ENCODE measurements at regions of chr18 and their contacts with region 1.

Region 1: DNA sequence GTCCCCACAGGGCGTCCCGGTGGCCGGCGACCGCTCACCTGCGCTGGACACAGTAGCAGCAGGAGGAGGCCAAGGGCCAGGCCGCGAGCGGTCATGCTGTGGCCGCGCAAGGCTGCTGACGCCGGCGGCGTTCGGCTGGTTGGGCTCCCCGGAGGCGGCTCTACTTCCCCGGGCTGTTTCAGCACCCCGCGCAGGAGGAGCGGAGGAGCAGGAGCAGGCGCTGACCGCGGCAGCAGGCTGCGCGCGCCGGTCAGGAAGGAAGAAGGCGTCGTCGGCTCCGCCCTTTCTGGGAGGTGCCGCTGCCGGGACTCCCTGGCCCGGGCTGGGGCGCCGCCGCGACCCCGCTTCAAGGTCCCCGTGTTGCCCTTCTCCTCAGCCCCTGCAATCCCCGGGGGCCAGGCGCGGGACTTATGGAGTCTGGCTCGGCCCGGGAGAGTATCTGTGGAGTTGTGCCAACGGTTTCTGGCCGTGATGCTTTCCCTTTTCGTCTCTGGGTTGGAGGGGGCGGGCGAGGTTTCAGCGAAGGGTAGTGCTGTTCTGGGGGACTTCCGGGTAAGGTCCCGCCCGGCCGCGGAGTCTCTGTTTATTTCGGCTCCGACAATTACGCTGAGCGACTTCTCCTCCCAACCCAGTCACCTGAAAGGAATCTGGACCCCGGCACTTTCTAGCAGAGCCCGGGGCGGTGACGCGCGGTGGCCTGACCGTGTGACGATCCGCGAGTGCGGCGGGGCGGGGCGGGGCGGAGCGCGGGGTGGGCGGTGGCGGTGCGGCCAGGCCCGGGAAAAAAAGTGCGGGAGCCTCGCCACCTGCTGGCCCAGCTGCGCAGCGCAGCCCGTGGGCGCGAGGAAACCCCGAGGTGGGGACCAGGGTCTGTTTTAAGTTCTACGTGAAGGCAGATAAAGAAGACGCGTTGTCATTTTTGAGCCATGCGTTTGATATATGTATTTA is at the start of gene NPC1:
- DNase-seq: peak; percentile 84 to 96 (median 91)
- ATAC-seq: peak; percentile 88
- H3K4me3 ChIP-seq: peak within 1 kb of the TSS; percentile 99 to 100
- H3K4me3 Mint-ChIP-seq: peak within 1 kb of the TSS; percentile 95
- H3K27ac ChIP-seq: peak within 1 kb of the TSS; percentile 99 to 100
- H3K27ac Mint-ChIP-seq: peak within 1 kb of the TSS; percentile 97
- H3K4me1 ChIP-seq: peaks cover 24% of the 10 kb centered on the region
- H3K4me1 Mint-ChIP-seq: peaks cover 41% of the 10 kb centered on the region
- H3K27me3 ChIP-seq: no peaks in the 10 kb centered on the region
- H3K27me3 Mint-ChIP-seq: no peaks in the 10 kb centered on the region
- CTCF ChIP-seq: peak; percentile 99
- total RNA-seq, gene NPC1: 37.3 to 38.9 TPM

Region 2: DNA sequence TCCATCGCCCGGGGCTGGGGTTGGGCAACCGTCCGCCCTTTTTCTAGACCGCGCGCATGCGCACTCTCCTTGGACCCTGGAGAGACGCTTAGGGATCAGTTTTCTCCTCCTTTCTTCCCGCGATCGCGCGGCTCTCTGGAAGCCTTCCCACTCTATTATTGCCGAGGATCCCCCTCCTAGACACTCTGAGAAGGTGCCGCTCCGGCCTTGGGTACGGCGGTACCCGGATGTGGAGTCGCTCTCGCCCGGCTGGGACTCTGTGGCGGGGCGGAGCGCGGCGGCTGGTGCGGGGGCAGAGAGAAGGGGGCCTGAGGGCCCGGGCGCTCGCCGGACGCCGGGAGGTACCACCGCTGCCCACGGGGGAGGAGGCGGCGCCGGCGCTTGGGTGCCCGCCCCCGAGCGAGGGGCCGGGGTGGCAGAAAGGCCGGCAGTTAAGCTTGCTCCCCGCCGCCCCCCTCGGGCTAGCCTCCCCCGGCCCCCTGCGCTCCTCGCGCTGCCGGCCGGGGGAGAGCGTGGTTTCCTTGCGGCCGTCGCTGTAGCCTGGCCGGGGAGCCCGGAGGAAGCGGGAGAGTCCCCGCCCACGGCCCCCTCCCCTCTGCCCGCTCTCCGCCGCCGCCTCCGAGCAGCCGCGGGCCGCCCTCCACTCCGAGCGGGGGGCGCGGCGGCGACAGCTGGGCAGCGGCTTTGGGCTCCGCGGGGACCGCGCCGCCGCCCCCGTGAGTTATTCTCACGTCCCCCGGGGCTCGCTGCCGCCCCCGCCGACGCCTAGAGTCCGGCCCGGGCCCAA is 1845.6 kb before region 1 on chr18 and contains the start of gene MIB1:
- CTCF ChIA-PET with region 1: no interaction called
- POLR2A ChIA-PET with region 1: no interaction called
- intact Hi-C with region 1: loop called in 1 of 2 experiments (anchors 5 kb)
- DNase-seq: peak; percentile 22 to 100 (median 98)
- ATAC-seq: peak; percentile 56
- H3K4me3 ChIP-seq: peak within 1 kb of the TSS; percentile 71 to 93
- H3K4me3 Mint-ChIP-seq: peak within 1 kb of the TSS; percentile 97
- H3K27ac ChIP-seq: peak within 1 kb of the TSS; percentile 75 to 78
- H3K27ac Mint-ChIP-seq: peak within 1 kb of the TSS; percentile 96
- H3K4me1 ChIP-seq: peaks cover 20% of the 10 kb centered on the region
- H3K4me1 Mint-ChIP-seq: peaks cover 36% of the 10 kb centered on the region
- H3K27me3 ChIP-seq: no peaks in the 10 kb centered on the region
- H3K27me3 Mint-ChIP-seq: no peaks in the 10 kb centered on the region
- CTCF ChIP-seq: no peak
- total RNA-seq, gene MIB1: 8.7 to 8.9 TPM

Region 3: GRCh38 chr18:22734776-22735627 is 851.5 kb before region 1 on chr18:
- CTCF ChIA-PET with region 1: no interaction called
- POLR2A ChIA-PET with region 1: no interaction called
- intact Hi-C with region 1: no loop called
- DNase-seq: no peak
- ATAC-seq: no peak
- H3K4me3 ChIP-seq: no peak overlapping the region
- H3K4me3 Mint-ChIP-seq: no peak overlapping the region
- H3K27ac ChIP-seq: no peak overlapping the region
- H3K27ac Mint-ChIP-seq: no peak overlapping the region
- H3K4me1 ChIP-seq: no peaks in the 10 kb centered on the region
- H3K4me1 Mint-ChIP-seq: no peaks in the 10 kb centered on the region
- H3K27me3 ChIP-seq: no peaks in the 10 kb centered on the region
- H3K27me3 Mint-ChIP-seq: peaks cover 3% of the 10 kb centered on the region
- CTCF ChIP-seq: no peak

Region 4: GRCh38 chr18:23452728-23453679 is 133.5 kb before region 1 on chr18 and contains the start of gene RIOK3:
- CTCF ChIA-PET with region 1: no interaction called
- POLR2A ChIA-PET with region 1: interaction called, 3 read pairs
- intact Hi-C with region 1: loop called (anchors 1 kb)
- DNase-seq: peak; percentile 71 to 93 (median 85)
- ATAC-seq: peak; percentile 90
- H3K4me3 ChIP-seq: peak within 1 kb of the TSS; percentile 69 to 97
- H3K4me3 Mint-ChIP-seq: peak within 1 kb of the TSS; percentile 99
- H3K27ac ChIP-seq: peak within 1 kb of the TSS; percentile 65 to 85
- H3K27ac Mint-ChIP-seq: peak within 1 kb of the TSS; percentile 94
- H3K4me1 ChIP-seq: peaks cover 32% of the 10 kb centered on the region
- H3K4me1 Mint-ChIP-seq: peaks cover 49% of the 10 kb centered on the region
- H3K27me3 ChIP-seq: no peaks in the 10 kb centered on the region
- H3K27me3 Mint-ChIP-seq: no peaks in the 10 kb centered on the region
- CTCF ChIP-seq: no peak
- total RNA-seq, gene RIOK3: 159 to 185 TPM

Region 5: DNA sequence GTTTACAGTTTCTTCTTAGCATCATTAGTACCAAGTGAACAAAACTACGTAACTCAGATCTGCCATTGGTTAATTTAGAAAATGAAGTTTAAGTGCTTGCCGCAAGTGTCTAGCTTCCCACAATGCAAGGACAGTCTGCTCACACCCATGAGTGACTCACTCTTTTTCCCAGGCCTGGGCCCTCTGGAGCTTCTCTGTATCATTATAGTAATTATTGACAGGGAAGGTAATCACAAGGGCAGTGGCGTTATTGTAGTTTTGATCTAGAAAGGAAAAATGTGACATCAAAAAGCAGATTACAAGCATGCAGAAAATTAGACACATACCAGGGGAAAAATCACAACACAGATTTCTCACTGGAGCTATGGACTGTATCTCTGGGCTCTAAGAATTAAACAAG is 38.7 kb before region 1 on chr18:
- CTCF ChIA-PET with region 1: no interaction called
- POLR2A ChIA-PET with region 1: no interaction called
- intact Hi-C with region 1: loop called in 1 of 2 experiments (anchors 5 kb)
- DNase-seq: no peak
- ATAC-seq: no peak
- H3K4me3 ChIP-seq: no peak overlapping the region
- H3K4me3 Mint-ChIP-seq: no peak overlapping the region
- H3K27ac ChIP-seq: no peak overlapping the region
- H3K27ac Mint-ChIP-seq: no peak overlapping the region
- H3K4me1 ChIP-seq: no peaks in the 10 kb centered on the region
- H3K4me1 Mint-ChIP-seq: no peaks in the 10 kb centered on the region
- H3K27me3 ChIP-seq: no peaks in the 10 kb centered on the region
- H3K27me3 Mint-ChIP-seq: no peaks in the 10 kb centered on the region
- CTCF ChIP-seq: no peak

Region 6: GRCh38 chr18:23573626-23574431 is 12.7 kb before region 1 on chr18:
- CTCF ChIA-PET with region 1: interaction called, 6 read pairs
- POLR2A ChIA-PET with region 1: interaction called, 6 read pairs
- intact Hi-C with region 1: loop called in 1 of 2 experiments (anchors 1 kb)
- DNase-seq: peak in 7 of 9 experiments; percentile 16 to 76 (median 30)
- ATAC-seq: peak; percentile 68
- H3K4me3 ChIP-seq: peak overlapping the region; percentile 9 to 13
- H3K4me3 Mint-ChIP-seq: peak overlapping the region; percentile 56
- H3K27ac ChIP-seq: peak overlapping the region; percentile 30 to 89
- H3K27ac Mint-ChIP-seq: peak overlapping the region; percentile 91
- H3K4me1 ChIP-seq: peaks cover 24% of the 10 kb centered on the region
- H3K4me1 Mint-ChIP-seq: peaks cover 62% of the 10 kb centered on the region
- H3K27me3 ChIP-seq: no peaks in the 10 kb centered on the region
- H3K27me3 Mint-ChIP-seq: no peaks in the 10 kb centered on the region
- CTCF ChIP-seq: no peak

Region 7: GRCh38 chr18:23844991-23845680 is 258.6 kb after region 1 on chr18:
- CTCF ChIA-PET with region 1: no interaction called
- POLR2A ChIA-PET with region 1: no interaction called
- intact Hi-C with region 1: no loop called
- DNase-seq: no peak
- ATAC-seq: no peak
- H3K4me3 ChIP-seq: no peak overlapping the region
- H3K4me3 Mint-ChIP-seq: no peak overlapping the region
- H3K27ac ChIP-seq: no peak overlapping the region
- H3K27ac Mint-ChIP-seq: no peak overlapping the region
- H3K4me1 ChIP-seq: no peaks in the 10 kb centered on the region
- H3K4me1 Mint-ChIP-seq: no peaks in the 10 kb centered on the region
- H3K27me3 ChIP-seq: no peaks in the 10 kb centered on the region
- H3K27me3 Mint-ChIP-seq: peaks cover 1% of the 10 kb centered on the region
- CTCF ChIP-seq: no peak